ENCODE measurements at regions of chr4 and their contacts with region 1.

Region 1: DNA sequence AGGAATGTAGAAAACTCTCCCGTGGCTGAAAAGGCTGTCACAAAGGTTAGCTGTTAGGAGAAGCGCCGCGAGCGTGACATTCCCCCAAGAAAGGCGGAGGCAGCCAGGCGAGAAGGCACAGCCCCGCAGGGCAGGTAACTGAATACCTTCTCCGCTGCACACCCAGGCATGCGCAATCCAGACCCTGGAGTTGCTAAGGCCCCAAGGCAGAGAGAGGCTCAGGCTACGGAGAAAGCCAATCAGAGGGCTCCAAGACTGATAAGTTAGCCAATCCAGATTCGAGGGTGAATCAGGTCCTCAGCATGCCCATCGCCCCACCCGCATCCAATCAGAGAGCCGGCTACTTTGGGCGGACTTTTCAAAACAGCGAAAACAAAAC is 485 bp upstream of the CCNG2 start:
- DNase-seq: peak; percentile 100
- H3K4me3 ChIP-seq: peak overlapping the region; percentile 96
- H3K27ac ChIP-seq: peak overlapping the region; percentile 98
- H3K4me1 ChIP-seq: peaks cover 65% of the 10 kb centered on the region
- CTCF ChIP-seq: no peak

Region 2: GRCh38 chr4:75514131-75514948 is 1642.2 kb before region 1 on chr4 and contains the starts of genes RCHY1 and THAP6:
- CTCF ChIA-PET with region 1: no interaction called
- POLR2A ChIA-PET with region 1: no interaction called
- intact Hi-C with region 1: loop called (anchors 10 kb)
- DNase-seq: peak; percentile 93
- H3K4me3 ChIP-seq: peak within 1 kb of the TSS; percentile 87
- H3K27ac ChIP-seq: peak within 1 kb of the TSS; percentile 92
- H3K4me1 ChIP-seq: peaks cover 34% of the 10 kb centered on the region
- CTCF ChIP-seq: 0 out of 2 replicates have a peak, but pooled peaks have one; percentile 10
- total RNA-seq, gene RCHY1: 7.7 and 9.2 TPM in 2 replicates
- total RNA-seq, gene THAP6: 15.9 and 17.2 TPM in 2 replicates

Region 3: DNA sequence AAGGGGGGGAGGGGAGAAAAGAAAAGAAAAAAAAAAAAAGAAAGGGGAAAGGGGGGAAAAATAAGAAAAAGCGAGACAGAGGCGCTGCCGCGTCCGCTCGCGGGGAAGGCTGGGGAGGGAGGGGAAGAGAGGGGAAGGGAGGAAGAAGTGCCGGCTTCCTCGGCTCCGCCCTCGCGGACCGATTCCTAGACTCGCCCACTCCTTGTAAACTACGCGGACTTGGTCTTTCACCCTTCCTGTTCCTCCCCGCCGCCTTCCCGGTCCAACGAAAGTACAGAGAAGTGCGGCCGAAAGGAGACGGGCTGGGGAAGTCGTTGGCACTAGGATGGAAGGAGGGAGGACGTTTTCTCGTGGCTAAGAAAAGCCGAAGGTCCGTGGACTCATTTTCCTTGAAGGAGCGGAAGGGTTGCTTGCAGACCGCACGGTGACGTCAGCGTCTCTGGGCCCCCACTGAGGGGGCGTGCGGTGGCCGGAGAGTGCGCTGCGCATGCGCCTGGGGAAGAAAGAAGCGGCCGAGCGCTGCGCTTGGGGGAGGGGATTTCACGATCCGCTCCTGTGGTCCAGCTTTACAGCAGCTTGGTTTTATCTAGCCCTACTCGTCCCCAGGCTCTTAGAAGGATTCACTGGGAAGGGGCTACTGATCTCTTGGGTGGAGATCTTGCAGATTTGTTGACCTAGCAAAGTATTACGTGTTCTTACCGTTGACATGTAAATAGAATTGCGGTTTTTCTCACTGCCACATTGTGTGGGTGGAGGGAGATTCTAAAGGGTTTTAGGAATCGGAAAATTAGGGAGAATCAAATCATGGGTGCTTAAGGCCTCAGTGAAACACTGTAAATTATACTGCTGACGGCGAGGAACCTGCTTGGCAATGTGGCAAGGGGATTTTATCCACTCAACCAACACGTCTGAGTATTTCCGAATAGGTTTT is 80.4 kb before region 1 on chr4 and contains the start of gene CCNI:
- CTCF ChIA-PET with region 1: no interaction called
- POLR2A ChIA-PET with region 1: interaction called, 73 read pairs
- intact Hi-C with region 1: loop called (anchors 1 kb)
- DNase-seq: peak; percentile 99
- H3K4me3 ChIP-seq: peak within 1 kb of the TSS; percentile 95
- H3K27ac ChIP-seq: peak within 1 kb of the TSS; percentile 84
- H3K4me1 ChIP-seq: peaks cover 64% of the 10 kb centered on the region
- CTCF ChIP-seq: no peak
- total RNA-seq, gene CCNI: 105 and 116 TPM in 2 replicates

Region 4: GRCh38 chr4:77126809-77127208 is 29.7 kb before region 1 on chr4:
- CTCF ChIA-PET with region 1: interaction called, 24 read pairs
- POLR2A ChIA-PET with region 1: interaction called, 213 read pairs
- intact Hi-C with region 1: loop called (anchors 1 kb)
- DNase-seq: peak; percentile 87
- H3K4me3 ChIP-seq: peak overlapping the region; percentile 15
- H3K27ac ChIP-seq: peak overlapping the region; percentile 74
- H3K4me1 ChIP-seq: peaks cover 50% of the 10 kb centered on the region
- CTCF ChIP-seq: no peak

Region 5: GRCh38 chr4:77393996-77394395 is 237.5 kb after region 1 on chr4:
- CTCF ChIA-PET with region 1: no interaction called
- POLR2A ChIA-PET with region 1: no interaction called
- intact Hi-C with region 1: no loop called
- DNase-seq: no peak
- H3K4me3 ChIP-seq: no peak overlapping the region
- H3K27ac ChIP-seq: no peak overlapping the region
- H3K4me1 ChIP-seq: no peaks in the 10 kb centered on the region
- CTCF ChIP-seq: no peak

Region 6: DNA sequence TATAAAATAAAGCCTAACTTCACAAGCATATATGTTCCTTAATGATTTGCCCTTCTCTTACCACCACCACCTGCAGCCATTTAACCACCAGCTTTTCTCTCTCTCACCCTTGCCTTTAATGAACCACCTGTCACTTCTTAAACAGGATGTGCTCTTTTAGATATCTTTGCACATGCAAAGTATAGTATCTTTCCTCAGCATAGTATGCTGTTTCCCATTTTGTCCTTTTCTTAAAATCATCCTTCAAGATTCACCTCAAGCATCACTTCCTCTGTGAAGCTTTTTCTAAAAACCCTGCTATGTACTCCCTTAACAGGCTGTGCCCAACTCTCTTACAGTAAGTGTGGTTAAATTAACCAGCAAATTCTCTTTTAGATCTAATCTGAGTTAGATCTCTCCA is 670.8 kb after region 1 on chr4:
- CTCF ChIA-PET with region 1: no interaction called
- POLR2A ChIA-PET with region 1: interaction called, 4 read pairs
- intact Hi-C with region 1: loop called (anchors 5 kb)
- DNase-seq: peak; percentile 91
- H3K4me3 ChIP-seq: peak overlapping the region; percentile 57
- H3K27ac ChIP-seq: peak overlapping the region; percentile 94
- H3K4me1 ChIP-seq: peaks cover 81% of the 10 kb centered on the region
- CTCF ChIP-seq: no peak